ENCODE measurements at regions of chr17 and their contacts with region 1.

Region 1: GRCh38 chr17:75749545-75750389 is 15.2 kb downstream of the GALK1 start:
- DNase-seq: peak; percentile 91
- H3K4me3 Mint-ChIP-seq: peak overlapping the region; percentile 37
- H3K27ac Mint-ChIP-seq: no peak overlapping the region
- H3K4me1 Mint-ChIP-seq: peaks cover 21% of the 10 kb centered on the region
- H3K27me3 Mint-ChIP-seq: no peaks in the 10 kb centered on the region

Region 2: GRCh38 chr17:75619506-75620431 is 130.0 kb before region 1 on chr17:
- CTCF ChIA-PET with region 1: interaction called, 11 read pairs
- POLR2A ChIA-PET with region 1: no interaction called
- intact Hi-C with region 1: no loop called
- DNase-seq: peak; percentile 30
- H3K4me3 Mint-ChIP-seq: no peak overlapping the region
- H3K27ac Mint-ChIP-seq: no peak overlapping the region
- H3K4me1 Mint-ChIP-seq: no peaks in the 10 kb centered on the region
- H3K27me3 Mint-ChIP-seq: no peaks in the 10 kb centered on the region

Region 3: DNA sequence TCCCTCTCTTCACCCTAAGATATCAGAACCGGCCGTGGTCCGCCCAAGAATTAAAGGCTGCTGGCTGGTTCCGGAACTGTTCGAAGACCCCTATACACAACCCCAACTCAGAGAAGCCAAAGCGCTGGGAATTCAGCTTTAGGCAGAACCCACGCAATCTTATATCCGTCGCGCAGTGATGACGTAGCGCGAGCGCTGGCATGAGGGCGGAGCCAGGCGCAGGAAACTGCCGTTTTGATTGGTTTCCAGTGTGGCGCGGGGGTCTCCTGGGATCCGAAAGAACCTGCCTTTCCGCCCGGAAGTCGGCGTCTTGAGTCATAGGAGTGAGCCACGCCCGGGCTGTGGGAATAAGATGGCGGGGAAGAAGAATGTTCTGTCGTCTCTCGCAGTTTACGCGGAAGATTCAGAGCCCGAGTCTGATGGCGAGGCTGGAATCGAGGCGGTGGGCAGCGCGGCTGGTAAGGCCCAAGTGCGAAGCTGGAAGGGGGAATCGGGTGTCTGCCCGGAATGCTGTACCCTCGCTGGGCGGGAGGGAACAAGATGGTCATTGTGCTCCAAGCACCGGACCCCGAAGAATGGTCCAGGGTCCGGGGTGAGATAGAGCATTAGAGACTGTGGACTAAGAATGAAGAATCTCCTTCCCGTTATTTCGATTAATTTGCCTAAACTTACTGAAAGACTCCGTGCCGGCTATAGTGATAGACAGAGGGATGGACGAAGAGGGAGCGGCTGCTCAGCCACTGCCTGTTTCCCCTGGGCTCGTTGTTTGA is 82.6 kb before region 1 on chr17 and contains the starts of genes RECQL5 and SAP30BP:
- CTCF ChIA-PET with region 1: interaction called, 151 read pairs
- POLR2A ChIA-PET with region 1: interaction called, 5 read pairs
- intact Hi-C with region 1: no loop called
- DNase-seq: peak; percentile 98
- H3K4me3 Mint-ChIP-seq: peak within 1 kb of the TSS; percentile 47
- H3K27ac Mint-ChIP-seq: no peak within 1 kb of the TSS
- H3K4me1 Mint-ChIP-seq: peaks cover 25% of the 10 kb centered on the region
- H3K27me3 Mint-ChIP-seq: no peaks in the 10 kb centered on the region
- total RNA-seq, gene RECQL5: 27.7 to 31.3 TPM
- total RNA-seq, gene SAP30BP: 81.4 to 92.7 TPM

Region 4: GRCh38 chr17:75723850-75724342 is 25.9 kb before region 1 on chr17:
- CTCF ChIA-PET with region 1: interaction called, 24 read pairs
- POLR2A ChIA-PET with region 1: no interaction called
- intact Hi-C with region 1: no loop called
- DNase-seq: no peak
- H3K4me3 Mint-ChIP-seq: no peak overlapping the region
- H3K27ac Mint-ChIP-seq: no peak overlapping the region
- H3K4me1 Mint-ChIP-seq: peaks cover 3% of the 10 kb centered on the region
- H3K27me3 Mint-ChIP-seq: peaks cover 9% of the 10 kb centered on the region

Region 5: GRCh38 chr17:75784473-75785015 is 34.8 kb after region 1 on chr17 and contains the start of gene UNK:
- CTCF ChIA-PET with region 1: interaction called, 16 read pairs
- POLR2A ChIA-PET with region 1: interaction called, 7 read pairs
- intact Hi-C with region 1: no loop called
- DNase-seq: peak; percentile 97
- H3K4me3 Mint-ChIP-seq: peak within 1 kb of the TSS; percentile 90
- H3K27ac Mint-ChIP-seq: peak within 1 kb of the TSS; percentile 98
- H3K4me1 Mint-ChIP-seq: peaks cover 35% of the 10 kb centered on the region
- H3K27me3 Mint-ChIP-seq: peaks cover 1% of the 10 kb centered on the region
- total RNA-seq, gene UNK: 21.8 to 24.7 TPM

Region 6: DNA sequence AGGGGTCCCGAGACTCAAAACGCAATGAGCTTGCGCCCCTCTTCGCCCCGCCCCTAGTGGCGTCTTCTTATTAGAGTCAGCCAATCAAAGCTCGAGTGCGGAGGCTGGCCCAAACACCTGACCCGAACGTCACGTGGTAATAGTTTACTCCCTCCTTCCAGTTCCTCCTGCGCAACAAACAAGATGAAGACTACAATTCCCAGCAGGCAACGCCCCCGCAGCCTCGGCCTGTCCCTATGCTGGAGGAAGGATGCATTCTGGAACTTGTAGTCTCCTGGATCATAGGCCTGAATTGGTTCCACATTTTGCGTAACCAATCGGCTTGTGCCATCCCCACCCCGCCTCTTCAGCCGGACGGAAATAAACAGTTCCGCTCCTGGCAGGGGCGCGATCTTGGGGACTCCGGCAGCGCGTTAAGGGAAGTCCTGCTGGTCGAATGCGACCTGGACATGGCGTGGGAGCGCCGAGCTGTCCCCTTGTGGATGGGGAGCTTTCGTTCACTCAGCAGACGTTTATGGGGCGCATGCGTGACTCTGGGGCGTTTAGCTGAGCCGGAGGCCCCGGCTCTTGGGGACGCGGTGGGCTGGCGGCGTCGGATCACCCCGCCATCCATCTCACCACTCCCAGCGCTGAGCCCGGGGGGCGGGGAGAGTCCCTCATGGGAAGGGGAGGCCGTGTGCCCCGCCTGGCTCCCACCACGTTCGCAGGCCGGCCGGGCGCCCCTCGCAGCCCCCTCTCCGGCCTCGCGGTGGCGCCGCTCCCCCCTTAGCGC is 105.7 kb after region 1 on chr17 and contains the start of gene WBP2:
- CTCF ChIA-PET with region 1: interaction called, 25 read pairs
- POLR2A ChIA-PET with region 1: interaction called, 5 read pairs
- intact Hi-C with region 1: no loop called
- DNase-seq: peak; percentile 99
- H3K4me3 Mint-ChIP-seq: no peak within 1 kb of the TSS
- H3K27ac Mint-ChIP-seq: peak within 1 kb of the TSS; percentile 86
- H3K4me1 Mint-ChIP-seq: peaks cover 35% of the 10 kb centered on the region
- H3K27me3 Mint-ChIP-seq: no peaks in the 10 kb centered on the region
- total RNA-seq, gene WBP2: 79.1 to 80.6 TPM

Region 7: GRCh38 chr17:75904749-75905521 is 155.2 kb after region 1 on chr17 and contains the start of gene MRPL38:
- CTCF ChIA-PET with region 1: no interaction called
- POLR2A ChIA-PET with region 1: no interaction called
- intact Hi-C with region 1: no loop called
- DNase-seq: peak; percentile 97
- H3K4me3 Mint-ChIP-seq: peak within 1 kb of the TSS; percentile 99
- H3K27ac Mint-ChIP-seq: peak within 1 kb of the TSS; percentile 90
- H3K4me1 Mint-ChIP-seq: peaks cover 17% of the 10 kb centered on the region
- H3K27me3 Mint-ChIP-seq: no peaks in the 10 kb centered on the region
- total RNA-seq, gene MRPL38: 108 TPM

Measured in activated CD4-positive, alpha-beta memory T cell treated with anti-CD3 and anti-CD28 coated beads for 36 hours (primary cell).